ENCODE measurements at regions of chr3 and their contacts with region 1.

Region 1: GRCh38 chr3:131381444-131382291 is at the start of gene NUDT16:
- DNase-seq: peak; percentile 94 to 96
- ATAC-seq: peak; percentile 97 to 100 (median 97)
- H3K4me3 ChIP-seq: peak within 1 kb of the TSS; percentile 67
- H3K4me3 Mint-ChIP-seq: peak within 1 kb of the TSS; percentile 95
- H3K27ac ChIP-seq: peak within 1 kb of the TSS; percentile 51
- H3K27ac Mint-ChIP-seq: peak within 1 kb of the TSS; percentile 88 to 97
- H3K4me1 ChIP-seq: peaks cover 25% of the 10 kb centered on the region
- H3K4me1 Mint-ChIP-seq: peaks cover 30 to 40% of the 10 kb centered on the region in 2 donors
- H3K27me3 ChIP-seq: no peaks in the 10 kb centered on the region
- H3K27me3 Mint-ChIP-seq: no peaks in the 10 kb centered on the region
- CTCF ChIP-seq: no peak
- total RNA-seq, gene NUDT16: 9.0 to 10.7 (median 9.7) TPM

Region 2: DNA sequence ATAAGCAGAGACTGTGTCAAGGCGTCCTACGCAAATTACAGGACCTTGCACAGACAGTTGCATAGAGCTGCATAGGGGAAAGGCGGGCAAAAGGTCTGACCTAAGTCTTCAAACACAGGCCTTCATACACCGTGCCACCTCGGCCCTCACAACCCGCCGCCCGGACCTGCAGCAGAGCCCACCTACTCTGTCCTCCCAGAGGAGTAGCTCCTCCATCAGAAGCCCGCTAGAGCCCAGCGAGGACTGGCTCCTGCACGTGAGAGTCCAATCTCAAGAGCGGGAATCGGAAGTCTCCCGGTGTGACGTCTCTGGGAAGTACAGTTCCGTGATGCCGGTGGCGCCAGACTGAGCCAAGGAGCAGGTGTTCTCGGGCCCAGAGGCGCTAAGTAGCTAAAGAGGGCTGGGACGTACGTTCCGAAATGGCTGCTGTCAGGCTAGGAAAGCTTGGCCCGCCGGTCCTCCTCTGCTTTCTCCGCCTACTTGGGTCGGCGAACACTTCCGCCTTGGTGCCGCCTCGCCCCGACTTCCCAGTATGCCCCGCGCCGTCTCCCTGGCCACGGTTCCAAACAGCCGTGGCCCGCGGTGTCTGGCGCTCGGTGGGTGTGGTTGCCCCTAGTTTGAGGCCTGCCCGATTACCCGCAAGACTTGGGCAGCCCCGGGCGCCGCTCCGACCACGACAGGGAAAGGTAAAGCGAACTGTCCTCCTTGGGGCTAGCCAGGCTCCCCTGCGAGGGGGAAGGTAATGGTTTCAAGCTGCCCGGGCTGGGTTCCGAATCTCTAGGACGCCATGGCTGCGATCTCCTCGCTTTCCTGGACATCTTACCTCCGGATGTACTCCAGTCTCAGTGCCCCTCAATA is 355.1 kb before region 1 on chr3 and contains the starts of genes ASTE1 and NEK11:
- intact Hi-C with region 1: loop called (anchors 1 kb)
- DNase-seq: peak; percentile 89 to 95
- ATAC-seq: peak; percentile 96 to 99 (median 96)
- H3K4me3 ChIP-seq: peak within 1 kb of the TSS; percentile 97
- H3K4me3 Mint-ChIP-seq: peak within 1 kb of the TSS; percentile 97
- H3K27ac ChIP-seq: peak within 1 kb of the TSS; percentile 98
- H3K27ac Mint-ChIP-seq: peak within 1 kb of the TSS; percentile 97 to 98
- H3K4me1 ChIP-seq: peaks cover 20% of the 10 kb centered on the region
- H3K4me1 Mint-ChIP-seq: peaks cover 44 to 51% of the 10 kb centered on the region in 2 donors
- H3K27me3 ChIP-seq: no peaks in the 10 kb centered on the region
- H3K27me3 Mint-ChIP-seq: no peaks in the 10 kb centered on the region
- CTCF ChIP-seq: no peak
- total RNA-seq, gene ASTE1: 22.8 to 28.8 (median 24.3) TPM
- total RNA-seq, gene NEK11: 2.6 to 3.6 (median 3.5) TPM

Region 3: DNA sequence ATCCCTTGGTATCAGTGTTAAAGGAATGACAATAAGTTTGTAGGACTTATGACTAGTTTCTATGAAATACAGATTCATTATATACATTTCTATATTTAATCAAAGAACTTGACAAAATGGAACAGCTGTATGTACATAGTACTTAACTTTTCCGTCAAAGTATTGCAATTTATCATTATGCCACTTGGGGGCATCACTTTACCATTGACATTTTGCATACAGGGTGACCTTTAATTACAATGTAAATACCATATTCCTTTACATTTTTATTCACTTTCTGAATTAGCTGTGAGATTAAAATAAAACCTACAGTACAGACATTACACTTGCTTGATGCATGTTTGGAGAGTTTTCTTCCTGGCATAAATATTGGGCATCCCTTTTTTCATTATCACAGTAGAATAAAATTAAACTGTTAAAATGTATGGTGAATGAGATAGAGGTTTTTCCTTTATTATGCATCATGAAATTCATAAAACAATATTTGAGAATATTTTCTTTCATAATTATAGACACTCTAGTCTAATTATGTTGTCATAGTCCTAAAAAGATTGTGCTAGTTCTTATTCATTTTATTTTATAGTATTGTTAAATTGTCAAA is 348.1 kb before region 1 on chr3:
- intact Hi-C with region 1: loop called (anchors 1 kb)
- DNase-seq: peak in 1 of 2 donors; percentile 79
- ATAC-seq: peak; percentile 61 to 89 (median 79)
- H3K4me3 ChIP-seq: no peak overlapping the region
- H3K4me3 Mint-ChIP-seq: no peak overlapping the region
- H3K27ac ChIP-seq: no peak overlapping the region
- H3K27ac Mint-ChIP-seq: no peak overlapping the region
- H3K4me1 ChIP-seq: no peaks in the 10 kb centered on the region
- H3K4me1 Mint-ChIP-seq: no peaks in the 10 kb centered on the region
- H3K27me3 ChIP-seq: no peaks in the 10 kb centered on the region
- H3K27me3 Mint-ChIP-seq: no peaks in the 10 kb centered on the region
- CTCF ChIP-seq: peak; percentile 81

Region 4: DNA sequence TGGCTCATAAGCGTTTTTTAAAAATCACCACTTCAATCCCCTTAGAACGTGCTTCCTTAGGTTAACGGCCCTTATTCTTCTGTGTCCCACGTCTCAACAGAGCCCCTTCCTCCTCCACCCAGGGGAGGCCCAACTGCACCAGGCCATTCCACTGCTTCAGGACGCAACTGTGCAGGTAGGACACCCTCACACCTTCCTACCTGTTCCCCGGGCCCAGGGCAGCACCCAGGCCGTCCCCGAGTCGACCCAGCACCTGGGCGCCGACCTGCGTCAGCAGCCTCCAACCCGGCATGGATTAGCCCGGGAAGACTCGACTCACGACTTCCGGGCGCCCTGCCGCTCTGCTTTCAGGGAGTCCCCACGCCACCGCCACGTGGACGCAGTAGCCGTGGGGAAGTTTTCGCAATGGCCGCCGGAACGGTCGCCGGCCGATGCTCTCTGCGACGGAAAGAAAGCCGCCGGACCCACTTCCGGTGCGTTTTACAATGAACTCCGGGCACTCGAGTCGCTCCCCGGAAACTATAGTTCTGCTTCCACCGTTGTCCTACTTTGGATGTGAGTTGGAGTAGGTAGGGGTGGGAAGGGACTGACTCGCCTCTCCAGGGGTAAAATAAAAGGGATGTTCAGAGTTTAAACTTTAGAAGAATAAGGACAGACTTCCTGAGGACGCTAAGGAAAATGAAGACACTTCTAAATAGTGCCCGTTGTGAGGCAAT is 121.0 kb after region 1 on chr3 and contains the start of gene MRPL3:
- intact Hi-C with region 1: loop called (anchors 1 kb)
- DNase-seq: peak; percentile 79 to 92
- ATAC-seq: peak; percentile 94 to 96 (median 96)
- H3K4me3 ChIP-seq: peak within 1 kb of the TSS; percentile 98
- H3K4me3 Mint-ChIP-seq: peak within 1 kb of the TSS; percentile 98
- H3K27ac ChIP-seq: peak within 1 kb of the TSS; percentile 83
- H3K27ac Mint-ChIP-seq: peak within 1 kb of the TSS; percentile 97 to 99
- H3K4me1 ChIP-seq: peaks cover 9% of the 10 kb centered on the region
- H3K4me1 Mint-ChIP-seq: peaks cover 22 to 46% of the 10 kb centered on the region in 2 donors
- H3K27me3 ChIP-seq: peaks cover 3% of the 10 kb centered on the region
- H3K27me3 Mint-ChIP-seq: peaks cover 0 to 6% of the 10 kb centered on the region in 2 donors
- CTCF ChIP-seq: no peak
- total RNA-seq, gene MRPL3: 25.9 to 42.2 (median 29.7) TPM

Measured in natural killer cell (primary cell).